ENCODE measurements at regions of chr2 and their contacts with region 1.

Region 1: DNA sequence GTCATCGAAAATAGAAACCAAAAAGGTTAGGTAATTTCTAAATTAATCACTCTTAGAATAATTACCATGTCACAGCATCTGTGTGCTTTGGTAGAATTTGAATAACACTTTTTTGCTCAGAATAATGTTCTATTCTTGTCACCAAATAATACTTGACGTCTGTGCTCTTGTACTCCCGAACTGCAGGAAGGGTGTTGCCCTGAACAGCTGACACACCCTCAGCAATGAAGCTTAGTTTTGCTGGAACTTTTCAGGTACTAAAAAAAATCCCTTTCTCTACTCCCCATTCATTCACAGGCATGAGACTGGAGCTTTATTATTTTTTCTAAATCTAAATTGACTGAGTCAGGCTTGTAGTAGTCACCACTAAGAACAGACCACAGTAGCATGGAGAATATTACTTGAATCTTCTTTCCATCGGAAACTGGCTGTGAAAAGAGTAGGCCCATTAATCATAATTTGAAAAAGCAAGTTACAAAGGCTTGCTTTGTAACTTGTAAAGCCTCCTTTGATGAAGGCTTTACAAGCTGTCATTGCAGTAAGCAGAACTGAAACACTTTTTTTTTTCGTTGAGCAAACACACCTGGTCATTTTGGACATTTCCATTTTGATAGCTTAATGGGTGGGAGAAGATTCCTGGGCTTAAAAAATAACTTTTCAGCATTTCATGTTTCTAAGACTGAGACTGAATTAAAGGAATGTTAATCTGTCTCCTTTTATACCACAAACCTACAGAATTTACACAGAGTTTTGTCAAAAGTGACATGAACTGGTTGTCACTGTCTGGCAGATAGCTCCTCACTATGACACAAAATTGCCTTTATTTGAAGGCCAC is 70.3 kb upstream of the PELI1 start:
- DNase-seq: peak; percentile 57
- ATAC-seq: peak; percentile 67
- H3K4me3 Mint-ChIP-seq: peak overlapping the region; percentile 64
- H3K27ac Mint-ChIP-seq: peak overlapping the region; percentile 97
- H3K4me1 Mint-ChIP-seq: peaks cover 64% of the 10 kb centered on the region
- H3K27me3 Mint-ChIP-seq: no peaks in the 10 kb centered on the region

Region 2: DNA sequence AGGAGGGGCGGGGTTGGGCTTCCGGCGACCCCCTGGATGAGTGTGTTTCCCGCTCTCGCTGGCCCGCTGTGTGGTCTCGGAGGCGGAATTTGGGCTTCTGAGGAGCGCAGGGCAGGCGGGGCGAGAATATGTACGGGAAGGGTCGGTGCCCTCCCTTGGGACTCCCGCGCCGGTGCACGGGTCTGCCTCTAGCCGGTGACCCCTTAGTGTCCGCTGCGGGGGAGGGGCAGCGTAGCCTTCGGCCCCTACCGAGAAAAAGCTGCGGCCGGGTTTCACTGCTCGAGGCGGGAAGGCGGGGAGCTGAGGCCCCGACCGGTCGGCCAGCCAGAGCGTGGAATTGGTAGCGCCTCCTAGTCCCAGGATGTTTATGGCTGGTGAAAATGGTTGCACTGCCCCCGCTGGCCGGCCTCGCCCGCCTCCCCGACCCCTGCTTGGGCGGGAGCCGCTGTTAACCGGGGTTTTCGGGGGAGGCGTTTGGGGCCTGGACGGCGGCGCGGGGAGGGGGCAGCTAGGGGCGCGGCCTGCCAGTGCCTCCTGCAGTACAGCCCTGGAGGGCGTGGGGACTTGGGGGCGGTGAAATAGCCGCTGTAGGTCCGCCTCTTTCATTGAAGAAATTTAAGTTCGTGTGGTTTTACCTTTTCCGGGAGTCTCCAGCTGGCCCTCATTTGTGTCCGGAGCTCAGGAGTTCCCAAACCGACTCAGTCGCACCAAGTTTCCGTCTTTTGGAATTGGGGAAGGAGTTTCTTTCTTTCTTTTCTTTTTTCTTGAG is 373.1 kb before region 1 on chr2 and contains the start of gene UGP2:
- CTCF ChIA-PET with region 1: no interaction called
- POLR2A ChIA-PET with region 1: no interaction called
- intact Hi-C with region 1: loop called (anchors 2 to 10 kb)
- DNase-seq: peak; percentile 91
- ATAC-seq: peak; percentile 72
- H3K4me3 Mint-ChIP-seq: peak within 1 kb of the TSS; percentile 92
- H3K27ac Mint-ChIP-seq: peak within 1 kb of the TSS; percentile 98
- H3K4me1 Mint-ChIP-seq: peaks cover 39% of the 10 kb centered on the region
- H3K27me3 Mint-ChIP-seq: no peaks in the 10 kb centered on the region
- total RNA-seq, gene UGP2: 98.4 to 144 TPM

Region 3: GRCh38 chr2:64101141-64101591 is 113.3 kb before region 1 on chr2:
- CTCF ChIA-PET with region 1: interaction called, 3 read pairs
- POLR2A ChIA-PET with region 1: interaction called, 6 read pairs
- intact Hi-C with region 1: loop called (anchors 1 kb)
- DNase-seq: no peak
- ATAC-seq: peak; percentile 86
- H3K4me3 Mint-ChIP-seq: peak overlapping the region; percentile 3
- H3K27ac Mint-ChIP-seq: peak overlapping the region; percentile 51
- H3K4me1 Mint-ChIP-seq: peaks cover 54% of the 10 kb centered on the region
- H3K27me3 Mint-ChIP-seq: no peaks in the 10 kb centered on the region

Region 4: GRCh38 chr2:64144057-64145013 is 70.2 kb before region 1 on chr2 and contains the start of gene PELI1:
- CTCF ChIA-PET with region 1: interaction called, 7 read pairs
- POLR2A ChIA-PET with region 1: interaction called, 16 read pairs
- intact Hi-C with region 1: loop called (anchors 1 kb)
- DNase-seq: peak; percentile 97
- ATAC-seq: peak; percentile 89
- H3K4me3 Mint-ChIP-seq: peak within 1 kb of the TSS; percentile 84
- H3K27ac Mint-ChIP-seq: peak within 1 kb of the TSS; percentile 97
- H3K4me1 Mint-ChIP-seq: peaks cover 30% of the 10 kb centered on the region
- H3K27me3 Mint-ChIP-seq: no peaks in the 10 kb centered on the region
- total RNA-seq, gene PELI1: 21.3 to 29.7 TPM

Region 5: DNA sequence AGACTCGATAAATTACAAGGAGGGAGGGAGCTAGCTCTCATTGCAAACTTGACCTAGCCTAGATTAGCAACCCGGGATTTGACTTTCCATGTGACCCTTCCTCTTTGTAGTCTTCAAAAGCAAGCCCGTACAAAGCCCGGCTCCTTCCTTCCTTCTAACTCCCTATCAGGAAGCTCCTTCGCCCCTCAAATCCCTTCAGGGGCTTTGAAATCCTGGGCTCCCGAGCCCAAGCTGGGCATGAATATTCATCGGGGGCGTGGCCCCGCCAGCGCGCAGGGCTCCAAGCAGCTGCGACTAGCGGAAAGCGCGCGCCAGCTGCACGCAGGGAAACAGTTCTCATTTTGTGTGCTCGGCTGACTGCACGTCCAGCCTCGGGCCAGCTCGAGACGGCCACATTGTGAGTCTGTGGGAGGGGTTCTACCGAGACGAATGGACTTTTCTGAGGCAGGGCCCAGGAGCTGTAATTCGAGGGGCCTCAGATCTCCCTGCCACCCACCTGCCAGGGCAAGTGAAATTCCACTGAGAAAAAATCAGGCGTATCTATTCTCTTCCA is 13.7 kb after region 1 on chr2:
- CTCF ChIA-PET with region 1: interaction called, 17 read pairs
- POLR2A ChIA-PET with region 1: interaction called, 8 read pairs
- intact Hi-C with region 1: loop called in 1 of 2 experiments (anchors 1 kb)
- DNase-seq: peak; percentile 80
- ATAC-seq: peak; percentile 83
- H3K4me3 Mint-ChIP-seq: peak overlapping the region; percentile 72
- H3K27ac Mint-ChIP-seq: peak overlapping the region; percentile 91
- H3K4me1 Mint-ChIP-seq: peaks cover 28% of the 10 kb centered on the region
- H3K27me3 Mint-ChIP-seq: peaks cover 2% of the 10 kb centered on the region

Region 6: GRCh38 chr2:64311948-64312621 is 97.6 kb after region 1 on chr2:
- CTCF ChIA-PET with region 1: no interaction called
- POLR2A ChIA-PET with region 1: no interaction called
- intact Hi-C with region 1: no loop called
- DNase-seq: peak; percentile 10
- ATAC-seq: no peak
- H3K4me3 Mint-ChIP-seq: no peak overlapping the region
- H3K27ac Mint-ChIP-seq: no peak overlapping the region
- H3K4me1 Mint-ChIP-seq: no peaks in the 10 kb centered on the region
- H3K27me3 Mint-ChIP-seq: no peaks in the 10 kb centered on the region

Region 7: GRCh38 chr2:64653349-64654062 is 439.0 kb after region 1 on chr2 and contains the start of gene SERTAD2:
- CTCF ChIA-PET with region 1: no interaction called
- POLR2A ChIA-PET with region 1: no interaction called
- intact Hi-C with region 1: loop called in 1 of 2 experiments (anchors 1 kb)
- DNase-seq: peak; percentile 90
- ATAC-seq: peak; percentile 80
- H3K4me3 Mint-ChIP-seq: peak within 1 kb of the TSS; percentile 85
- H3K27ac Mint-ChIP-seq: peak within 1 kb of the TSS; percentile 94
- H3K4me1 Mint-ChIP-seq: peaks cover 76% of the 10 kb centered on the region
- H3K27me3 Mint-ChIP-seq: no peaks in the 10 kb centered on the region
- total RNA-seq, gene SERTAD2: 14.5 to 14.9 TPM

Region 8: DNA sequence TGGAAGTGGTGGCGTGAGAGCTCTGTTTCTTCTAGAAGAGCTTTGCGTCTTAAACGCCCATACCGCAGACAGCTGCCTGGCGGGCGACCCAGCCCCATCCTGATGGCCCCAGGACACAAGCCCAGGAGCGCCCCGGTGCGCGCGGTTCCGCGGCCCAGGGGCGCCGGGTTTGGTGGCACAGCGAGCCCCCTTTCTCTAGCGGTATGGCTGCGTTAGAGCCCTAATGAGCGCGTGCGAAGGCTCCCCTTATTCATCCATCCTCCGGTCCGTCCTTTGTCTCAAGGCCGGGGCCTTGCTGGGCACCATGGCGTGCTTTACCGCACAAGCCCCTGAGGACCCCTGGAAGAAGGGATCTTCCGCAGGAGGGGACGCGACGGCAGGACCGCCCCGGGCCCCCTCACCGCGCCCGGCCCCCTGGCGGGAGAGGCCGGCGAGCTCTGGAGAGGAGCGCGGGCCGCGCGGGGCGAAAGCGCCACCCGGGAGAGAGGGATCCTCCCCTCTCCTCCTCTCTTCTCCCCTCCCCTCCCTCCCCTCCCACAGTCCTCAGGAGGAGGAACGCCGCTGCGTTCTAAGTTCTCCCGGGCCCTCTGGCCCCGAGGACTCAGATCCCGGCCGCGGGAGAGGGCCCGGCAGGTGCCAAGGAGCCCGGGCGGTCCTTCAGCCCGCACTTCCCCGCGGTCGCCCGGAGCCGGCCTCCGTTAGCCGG is 774.1 kb after region 1 on chr2:
- CTCF ChIA-PET with region 1: no interaction called
- POLR2A ChIA-PET with region 1: no interaction called
- intact Hi-C with region 1: loop called in 1 of 2 experiments (anchors 2 kb)
- DNase-seq: peak; percentile 74
- ATAC-seq: peak; percentile 37
- H3K4me3 Mint-ChIP-seq: peak overlapping the region; percentile 68
- H3K27ac Mint-ChIP-seq: peak overlapping the region; percentile 55
- H3K4me1 Mint-ChIP-seq: peaks cover 46% of the 10 kb centered on the region
- H3K27me3 Mint-ChIP-seq: peaks cover 4% of the 10 kb centered on the region